A673 (cell line): ENCODE measurements at regions of chr1 and their contacts with region 1.

Region 1: GRCh38 chr1:62841587-62842169 is 57.7 kb downstream of the ATG4C start:
- DNase-seq: peak; percentile 84
- H3K4me3 ChIP-seq: no peak overlapping the region
- H3K27ac ChIP-seq: no peak overlapping the region
- H3K4me1 ChIP-seq: peaks cover 13% of the 10 kb centered on the region
- H3K27me3 ChIP-seq: no peaks in the 10 kb centered on the region
- CTCF ChIP-seq: peak; percentile 77

Region 2: DNA sequence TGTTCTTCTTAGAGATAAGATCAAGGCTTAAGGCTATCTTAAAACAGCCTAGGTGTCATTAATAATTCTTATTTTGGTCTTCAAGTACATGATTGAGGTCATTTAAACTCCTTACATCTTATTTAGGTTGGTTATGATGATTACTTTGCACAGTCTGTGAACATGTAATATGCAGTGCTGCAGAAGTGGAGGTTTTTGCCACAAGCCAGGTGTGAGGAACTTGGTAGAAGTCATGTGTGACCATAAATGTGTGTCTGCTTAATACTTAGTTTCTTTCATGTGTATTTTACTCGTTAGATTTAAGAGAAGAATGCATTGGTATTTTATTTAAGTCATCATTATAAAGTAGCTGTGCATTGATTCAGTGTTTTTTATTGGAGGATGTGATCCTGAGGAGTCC is 47.6 kb before region 1 on chr1:
- CTCF ChIA-PET with region 1: no interaction called
- POLR2A ChIA-PET with region 1: no interaction called
- intact Hi-C with region 1: no loop called
- DNase-seq: no peak
- H3K4me3 ChIP-seq: no peak overlapping the region
- H3K27ac ChIP-seq: no peak overlapping the region
- H3K4me1 ChIP-seq: no peaks in the 10 kb centered on the region
- H3K27me3 ChIP-seq: no peaks in the 10 kb centered on the region
- CTCF ChIP-seq: no peak

Region 3: GRCh38 chr1:62926681-62927252 is 85.1 kb after region 1 on chr1:
- CTCF ChIA-PET with region 1: interaction called, 3 read pairs
- POLR2A ChIA-PET with region 1: no interaction called
- intact Hi-C with region 1: loop called (anchors 2 kb)
- DNase-seq: peak; percentile 52
- H3K4me3 ChIP-seq: no peak overlapping the region
- H3K27ac ChIP-seq: peak overlapping the region; percentile 91
- H3K4me1 ChIP-seq: peaks cover 43% of the 10 kb centered on the region
- H3K27me3 ChIP-seq: no peaks in the 10 kb centered on the region
- CTCF ChIP-seq: peak; percentile 46

Region 4: DNA sequence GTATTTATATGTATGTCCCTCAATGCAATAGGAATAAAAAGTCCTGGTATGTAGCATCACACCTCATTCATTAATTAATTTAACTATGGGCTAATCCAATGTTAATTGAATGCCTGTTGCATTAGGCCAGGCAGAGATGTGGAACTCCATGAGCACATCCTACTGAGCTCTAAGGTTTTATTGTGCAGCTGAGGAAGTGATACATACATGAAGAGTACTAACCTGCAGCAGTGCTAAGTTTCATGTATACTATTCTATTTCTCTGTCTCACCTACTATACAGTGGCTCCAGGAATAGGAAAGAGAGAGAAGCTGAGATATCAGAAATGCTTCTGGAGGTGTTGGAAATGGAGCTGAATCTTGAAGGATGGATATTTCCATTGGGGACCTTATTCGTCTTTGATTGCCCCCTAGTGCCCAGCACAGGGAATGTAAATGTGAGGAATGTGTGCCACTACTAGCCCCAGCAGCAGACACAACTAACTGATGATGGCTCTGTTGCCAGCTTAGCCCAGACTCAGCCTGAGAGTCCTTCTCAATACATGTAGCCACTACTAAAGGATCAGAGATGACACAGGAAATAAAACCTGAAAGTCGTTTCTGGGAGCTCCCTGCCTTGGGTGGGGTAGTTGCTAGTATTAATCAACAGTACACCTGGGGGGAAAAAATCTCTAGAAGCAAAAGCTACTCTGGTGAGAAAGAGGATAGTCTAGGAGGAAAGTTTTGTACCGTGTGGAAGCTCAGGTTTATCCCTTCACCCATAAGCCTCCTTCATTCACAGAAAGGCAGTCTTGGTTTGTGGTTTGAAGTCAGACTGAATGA is 307.4 kb after region 1 on chr1:
- CTCF ChIA-PET with region 1: interaction called, 21 read pairs
- POLR2A ChIA-PET with region 1: no interaction called
- intact Hi-C with region 1: loop called (anchors 5 kb)
- DNase-seq: peak; percentile 79
- H3K4me3 ChIP-seq: no peak overlapping the region
- H3K27ac ChIP-seq: no peak overlapping the region
- H3K4me1 ChIP-seq: no peaks in the 10 kb centered on the region
- H3K27me3 ChIP-seq: no peaks in the 10 kb centered on the region
- CTCF ChIP-seq: peak; percentile 80

Region 5: DNA sequence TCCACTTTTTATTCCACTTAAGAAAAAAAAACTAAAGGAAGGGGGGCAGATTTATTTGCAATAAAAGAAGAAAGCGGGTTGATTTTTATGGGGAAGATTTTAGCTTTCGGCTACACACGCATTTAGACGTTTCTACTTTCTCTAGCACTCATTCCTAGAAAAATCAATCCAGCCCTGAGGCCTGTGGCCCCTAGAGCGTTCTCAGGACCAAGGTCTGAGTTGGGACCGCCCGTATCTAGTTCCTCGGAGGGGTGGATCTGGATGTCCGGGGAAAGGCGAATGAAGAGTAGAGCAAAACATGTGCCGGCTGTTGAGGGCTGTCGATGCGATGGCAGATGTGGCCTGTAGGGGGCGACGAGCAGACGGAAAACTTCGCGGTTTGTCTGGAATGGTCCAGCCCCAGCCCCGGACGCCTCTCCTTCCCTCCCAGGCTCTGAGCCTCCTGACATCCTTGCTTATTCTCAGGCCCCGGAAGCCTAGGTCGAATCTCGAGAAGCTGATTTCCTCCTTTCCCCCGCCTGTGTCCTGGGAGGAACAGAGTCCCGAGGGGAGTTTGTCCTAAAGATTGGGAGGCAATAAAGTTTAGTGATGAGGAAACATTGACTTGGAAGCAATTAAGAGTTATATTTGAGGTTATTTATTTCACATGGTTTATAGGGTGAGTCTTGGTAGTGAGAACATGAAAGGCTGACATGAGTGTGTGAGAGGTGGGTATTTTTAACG is 485.9 kb after region 1 on chr1:
- CTCF ChIA-PET with region 1: no interaction called
- POLR2A ChIA-PET with region 1: interaction called, 10 read pairs
- intact Hi-C with region 1: loop called (anchors 5 kb)
- DNase-seq: peak; percentile 84
- H3K4me3 ChIP-seq: no peak overlapping the region
- H3K27ac ChIP-seq: no peak overlapping the region
- H3K4me1 ChIP-seq: no peaks in the 10 kb centered on the region
- H3K27me3 ChIP-seq: no peaks in the 10 kb centered on the region
- CTCF ChIP-seq: peak; percentile 92

Region 6: DNA sequence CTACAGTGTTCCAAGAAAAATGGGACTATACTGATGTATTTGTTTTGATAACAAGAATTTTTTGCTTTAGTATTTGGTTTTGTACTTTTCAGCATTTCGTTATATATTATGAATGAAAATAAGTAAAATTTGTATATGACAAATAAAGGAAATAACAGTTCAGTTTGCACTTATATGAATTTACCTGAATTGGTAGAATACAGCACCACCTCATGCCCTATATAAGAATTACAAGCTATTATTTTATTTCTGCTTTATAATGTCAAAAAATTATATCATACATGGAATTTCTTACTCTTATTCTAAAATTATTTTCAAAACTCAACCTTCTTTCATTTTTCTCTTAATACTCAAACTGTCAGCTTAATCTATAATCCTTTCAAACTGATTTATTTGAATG is 696.3 kb after region 1 on chr1:
- CTCF ChIA-PET with region 1: interaction called, 4 read pairs
- POLR2A ChIA-PET with region 1: no interaction called
- intact Hi-C with region 1: loop called (anchors 5 kb)
- DNase-seq: peak; percentile 25
- H3K4me3 ChIP-seq: no peak overlapping the region
- H3K27ac ChIP-seq: no peak overlapping the region
- H3K4me1 ChIP-seq: no peaks in the 10 kb centered on the region
- H3K27me3 ChIP-seq: no peaks in the 10 kb centered on the region
- CTCF ChIP-seq: peak; percentile 68